ENCODE measurements at regions of chr5 and their contacts with region 1.

Region 1: GRCh38 chr5:150016537-150016936 is 16.0 kb downstream of the HMGXB3 start:
- DNase-seq: no peak
- H3K4me3 Mint-ChIP-seq: no peak overlapping the region
- H3K27ac Mint-ChIP-seq: no peak overlapping the region
- H3K4me1 Mint-ChIP-seq: peaks cover 44% of the 10 kb centered on the region
- H3K27me3 Mint-ChIP-seq: no peaks in the 10 kb centered on the region
- CTCF ChIP-seq: no peak

Region 2: GRCh38 chr5:150077060-150077459 is 60.5 kb after region 1 on chr5:
- CTCF ChIA-PET with region 1: interaction called, 10 read pairs
- intact Hi-C with region 1: no loop called
- DNase-seq: no peak
- H3K4me3 Mint-ChIP-seq: no peak overlapping the region
- H3K27ac Mint-ChIP-seq: no peak overlapping the region
- H3K4me1 Mint-ChIP-seq: no peaks in the 10 kb centered on the region
- H3K27me3 Mint-ChIP-seq: no peaks in the 10 kb centered on the region
- CTCF ChIP-seq: no peak